Activated CD4-positive, alpha-beta memory T cell treated with anti-CD3 and anti-CD28 coated beads, Interleukin-2, amount 10 ng/mL, durations not matched to agents 7 days and 5 days (primary cell): ENCODE measurements at regions of chr21 and their contacts with region 1.

Region 1: DNA sequence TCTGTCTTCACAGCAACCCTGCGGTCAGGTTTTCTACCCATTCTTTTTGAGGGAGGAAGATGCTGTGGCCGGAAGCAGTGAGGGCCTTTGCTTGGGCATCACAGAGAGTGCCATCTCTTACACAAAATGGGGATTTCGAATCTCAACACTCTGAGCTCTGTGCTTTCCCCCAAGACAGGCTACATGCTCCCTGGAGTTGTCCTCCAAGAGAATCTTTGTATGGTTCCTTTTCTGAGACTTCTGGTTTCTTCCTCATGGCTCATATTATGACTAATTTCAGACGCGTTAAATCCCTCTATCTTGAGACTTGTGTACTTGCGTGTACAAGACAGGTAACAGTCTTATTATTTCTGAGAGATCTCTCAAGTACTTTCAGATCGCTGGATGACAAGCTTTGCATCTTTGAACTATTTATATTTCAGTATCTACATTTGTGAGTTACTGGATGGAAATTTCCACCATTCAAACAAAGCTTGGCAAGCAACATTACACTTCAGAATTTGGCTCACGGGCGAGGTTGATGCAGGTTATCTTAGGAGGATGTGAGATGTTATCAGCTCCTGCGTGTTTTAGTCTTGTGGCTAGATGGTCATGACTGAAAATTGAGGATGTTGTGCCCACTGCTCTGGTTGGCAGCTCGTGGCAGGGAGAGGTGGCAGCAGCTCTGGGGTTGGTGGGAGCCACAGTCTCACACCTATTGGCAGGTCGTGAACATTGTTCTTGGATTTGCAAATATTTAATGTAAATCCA is 19.4 kb downstream of the ABCG1 start:
- DNase-seq: peak; percentile 71
- H3K4me3 Mint-ChIP-seq: peak overlapping the region; percentile 50
- H3K27ac Mint-ChIP-seq: peak overlapping the region; percentile 83
- H3K4me1 Mint-ChIP-seq: peaks cover 65% of the 10 kb centered on the region
- H3K27me3 Mint-ChIP-seq: no peaks in the 10 kb centered on the region

Region 2: GRCh38 chr21:42145569-42146272 is 92.6 kb before region 1 on chr21:
- CTCF ChIA-PET with region 1: interaction called, 17 read pairs
- POLR2A ChIA-PET with region 1: interaction called, 6 read pairs
- DNase-seq: peak; percentile 69
- H3K4me3 Mint-ChIP-seq: no peak overlapping the region
- H3K27ac Mint-ChIP-seq: no peak overlapping the region
- H3K4me1 Mint-ChIP-seq: peaks cover 8% of the 10 kb centered on the region
- H3K27me3 Mint-ChIP-seq: peaks cover 3% of the 10 kb centered on the region

Region 3: DNA sequence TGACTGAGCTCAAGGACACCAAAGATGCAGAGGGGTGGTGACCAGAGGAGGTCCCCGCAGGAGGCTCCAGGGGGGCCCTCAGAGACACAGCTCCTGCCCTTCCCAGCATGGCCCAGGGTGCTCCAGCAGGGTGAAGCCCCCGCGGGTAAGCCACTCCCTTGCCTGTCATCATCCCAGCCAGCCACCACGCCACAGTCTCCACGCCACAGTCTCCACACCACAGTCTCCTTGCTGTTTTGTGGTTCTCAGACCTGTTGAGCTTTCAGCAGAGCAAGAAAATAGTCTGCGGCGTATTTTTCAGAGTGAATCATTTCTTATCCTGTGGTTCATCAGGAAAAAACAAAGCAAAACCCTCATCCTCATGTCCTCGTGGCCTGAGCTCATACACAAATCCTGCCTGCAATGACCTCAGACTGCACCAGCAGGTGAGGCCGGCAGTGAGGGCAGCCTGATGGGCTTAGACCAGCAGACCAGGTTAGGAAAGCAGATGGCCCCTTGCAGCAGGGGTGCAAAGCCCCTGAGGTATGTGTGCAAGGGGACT is 45.2 kb before region 1 on chr21:
- CTCF ChIA-PET with region 1: interaction called, 14 read pairs
- POLR2A ChIA-PET with region 1: interaction called, 246 read pairs
- DNase-seq: peak; percentile 89
- H3K4me3 Mint-ChIP-seq: peak overlapping the region; percentile 12
- H3K27ac Mint-ChIP-seq: peak overlapping the region; percentile 70
- H3K4me1 Mint-ChIP-seq: peaks cover 72% of the 10 kb centered on the region
- H3K27me3 Mint-ChIP-seq: peaks cover 15% of the 10 kb centered on the region

Region 4: DNA sequence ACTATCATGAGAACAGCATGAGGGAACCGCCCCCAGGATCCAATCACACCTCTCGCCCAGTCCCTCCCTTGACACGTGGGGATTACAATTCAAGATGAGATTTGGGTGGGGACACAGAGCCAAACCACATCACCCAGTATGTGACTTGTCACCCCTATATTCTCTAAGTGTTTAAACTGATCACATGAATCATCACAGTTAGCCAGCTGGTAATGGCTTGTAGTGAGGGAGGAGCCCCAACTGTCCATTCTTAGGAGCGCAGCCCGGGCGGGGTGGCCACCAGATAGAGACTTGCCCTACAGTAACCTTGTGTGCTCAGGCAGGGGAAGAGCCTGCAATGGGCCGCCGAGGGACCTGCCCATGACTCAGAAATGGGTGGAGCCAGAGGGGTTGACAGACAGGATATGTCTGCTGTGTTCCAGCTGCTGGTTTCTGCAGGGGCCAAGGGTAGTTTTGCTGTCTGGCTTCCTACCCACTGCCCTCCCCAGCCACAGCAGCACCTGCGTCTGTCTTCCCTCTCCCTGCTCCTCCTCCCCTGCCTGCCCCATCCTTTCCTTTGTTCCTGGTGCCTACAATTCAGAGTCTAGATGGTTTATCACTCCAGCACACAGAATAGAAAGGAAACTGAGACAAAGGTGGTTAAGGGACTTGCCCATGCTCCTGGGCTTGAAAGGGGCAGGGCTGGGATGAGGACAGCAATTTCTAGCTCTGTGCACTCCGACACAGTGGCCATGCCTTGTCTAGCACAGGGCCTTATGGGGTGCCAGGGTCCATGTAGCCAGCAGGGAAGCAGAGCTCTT is 10.3 kb before region 1 on chr21:
- CTCF ChIA-PET with region 1: interaction called, 11 read pairs
- POLR2A ChIA-PET with region 1: interaction called, 68 read pairs
- DNase-seq: peak; percentile 93
- H3K4me3 Mint-ChIP-seq: peak overlapping the region; percentile 26
- H3K27ac Mint-ChIP-seq: peak overlapping the region; percentile 84
- H3K4me1 Mint-ChIP-seq: peaks cover 73% of the 10 kb centered on the region
- H3K27me3 Mint-ChIP-seq: no peaks in the 10 kb centered on the region

Region 5: DNA sequence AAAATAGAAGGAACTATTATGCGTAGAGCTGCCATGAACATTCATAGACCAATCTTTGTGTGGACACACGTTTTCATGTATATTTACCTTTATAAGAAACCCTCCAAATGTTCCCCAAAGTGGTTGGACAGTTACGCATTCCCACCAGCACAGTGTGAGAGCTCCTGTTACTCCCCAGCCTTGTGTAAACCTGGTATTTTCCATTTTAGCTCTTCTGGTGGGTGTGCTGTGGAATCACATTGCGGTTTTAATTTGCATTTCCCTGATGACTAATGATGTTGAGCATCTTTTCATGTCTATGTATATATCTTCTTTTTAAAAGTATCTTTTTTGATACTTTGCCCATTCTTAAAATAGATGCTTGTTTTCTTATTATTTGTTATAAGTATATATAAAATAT is 162.2 kb after region 1 on chr21:
- CTCF ChIA-PET with region 1: no interaction called
- POLR2A ChIA-PET with region 1: interaction called, 23 read pairs
- DNase-seq: no peak
- H3K4me3 Mint-ChIP-seq: no peak overlapping the region
- H3K27ac Mint-ChIP-seq: peak overlapping the region; percentile 29
- H3K4me1 Mint-ChIP-seq: peaks cover 53% of the 10 kb centered on the region
- H3K27me3 Mint-ChIP-seq: no peaks in the 10 kb centered on the region